ENCODE measurements at regions of chr17 and their contacts with region 1.

Region 1: DNA sequence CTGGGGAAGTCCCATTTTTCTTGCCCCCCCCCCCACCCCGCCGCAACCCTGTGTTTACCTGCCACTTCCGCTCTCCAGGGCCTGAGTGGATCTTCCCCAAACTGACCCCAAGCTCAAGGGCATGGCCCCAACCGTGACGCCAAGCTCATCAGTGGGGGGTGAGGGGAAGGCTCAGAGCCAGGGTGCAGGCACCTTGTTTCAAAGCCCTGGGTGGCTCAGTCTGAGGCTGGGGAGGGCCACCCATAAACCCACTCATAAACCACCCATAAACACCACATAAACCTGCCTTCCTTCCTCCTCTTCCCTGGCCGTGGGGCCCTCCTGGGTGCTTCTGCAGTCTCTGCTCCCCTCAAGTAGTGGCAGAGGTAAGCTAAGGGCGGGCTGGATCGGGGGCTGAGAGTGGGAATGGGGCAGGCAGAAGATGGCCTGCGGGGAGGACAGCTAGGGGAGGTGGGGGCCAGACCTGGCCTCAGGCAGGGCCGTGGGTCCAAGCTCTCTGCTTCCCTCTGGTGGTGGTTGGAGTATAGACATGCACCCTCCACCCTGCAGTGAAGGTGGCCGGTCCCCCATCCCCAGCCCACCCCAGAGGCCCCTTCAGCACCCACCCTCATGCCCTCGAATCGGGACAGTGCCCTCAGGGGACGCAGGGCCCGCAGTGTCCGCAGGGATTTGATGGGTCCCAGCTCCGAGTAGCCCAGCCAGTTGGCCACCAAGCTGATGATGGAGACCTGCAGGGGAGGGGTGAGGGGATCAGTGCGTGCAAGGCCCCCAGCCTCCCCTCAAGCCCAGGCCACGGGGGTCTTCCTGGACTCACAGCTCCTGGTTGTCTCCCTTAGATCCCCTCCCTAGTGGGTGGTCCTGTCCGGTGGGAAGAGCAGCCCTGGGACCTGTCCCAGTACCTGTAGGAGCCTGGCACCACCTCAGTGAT is 14.6 kb upstream of the CD79B start:
- DNase-seq: peak in 2 of 3 donors; percentile 55 to 68
- ATAC-seq: peak; percentile 74 to 86 (median 82)
- H3K4me3 ChIP-seq: no peak overlapping the region
- H3K27ac ChIP-seq: no peak overlapping the region
- H3K4me1 ChIP-seq: no peaks in the 10 kb centered on the region
- H3K27me3 ChIP-seq: no peaks in the 10 kb centered on the region
- CTCF ChIP-seq: peak; percentile 55 to 86 (median 84)
- POLR2A ChIP-seq: no peak

Region 2: GRCh38 chr17:63685041-63685440 is 261.7 kb before region 1 on chr17:
- intact Hi-C with region 1: no loop called
- DNase-seq: no peak
- ATAC-seq: no peak
- H3K4me3 ChIP-seq: no peak overlapping the region
- H3K27ac ChIP-seq: no peak overlapping the region
- H3K4me1 ChIP-seq: peaks cover 0 to 10% (median 2%) of the 10 kb centered on the region in 4 donors
- H3K27me3 ChIP-seq: no peaks in the 10 kb centered on the region
- CTCF ChIP-seq: no peak
- POLR2A ChIP-seq: no peak

Region 3: DNA sequence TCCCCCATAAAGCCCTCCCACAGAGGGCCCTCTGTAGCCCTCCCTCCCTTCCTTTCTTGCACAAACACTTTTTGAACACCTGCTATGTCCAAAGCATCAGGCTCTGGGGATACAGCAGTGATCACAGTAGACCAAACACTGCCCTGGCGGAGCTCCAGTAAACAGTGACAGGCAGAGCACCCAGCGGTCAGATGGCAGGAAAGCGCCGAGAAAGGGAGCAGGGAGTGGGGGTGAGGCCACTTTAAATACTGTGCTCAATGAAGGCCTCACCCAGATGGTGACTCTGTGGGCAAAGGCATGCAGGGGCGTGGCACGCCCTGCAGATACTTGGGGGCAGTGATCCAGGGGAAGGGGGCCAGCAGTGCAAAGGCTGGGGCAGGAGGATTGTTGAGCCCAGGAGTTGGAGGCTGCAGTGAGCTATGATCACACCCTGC is 59.0 kb after region 1 on chr17:
- intact Hi-C with region 1: loop called in 1 of 2 experiments (anchors 10 kb)
- DNase-seq: peak in 2 of 3 donors; percentile 67 to 73
- ATAC-seq: peak; percentile 52 to 67 (median 56)
- H3K4me3 ChIP-seq: no peak overlapping the region
- H3K27ac ChIP-seq: no peak overlapping the region
- H3K4me1 ChIP-seq: peaks cover 0 to 3% (median 0%) of the 10 kb centered on the region in 4 donors
- H3K27me3 ChIP-seq: no peaks in the 10 kb centered on the region
- CTCF ChIP-seq: no peak
- POLR2A ChIP-seq: no peak

Region 4: GRCh38 chr17:64081802-64082799 is 135.4 kb after region 1 on chr17:
- intact Hi-C with region 1: no loop called
- DNase-seq: no peak
- ATAC-seq: peak; percentile 79 to 92 (median 82)
- H3K4me3 ChIP-seq: no peak overlapping the region
- H3K27ac ChIP-seq: peak overlapping the region; percentile 72 to 84 (median 80)
- H3K4me1 ChIP-seq: peaks cover 0 to 72% (median 30%) of the 10 kb centered on the region in 4 donors
- H3K27me3 ChIP-seq: no peaks in the 10 kb centered on the region
- CTCF ChIP-seq: no peak
- POLR2A ChIP-seq: no peak

Region 5: DNA sequence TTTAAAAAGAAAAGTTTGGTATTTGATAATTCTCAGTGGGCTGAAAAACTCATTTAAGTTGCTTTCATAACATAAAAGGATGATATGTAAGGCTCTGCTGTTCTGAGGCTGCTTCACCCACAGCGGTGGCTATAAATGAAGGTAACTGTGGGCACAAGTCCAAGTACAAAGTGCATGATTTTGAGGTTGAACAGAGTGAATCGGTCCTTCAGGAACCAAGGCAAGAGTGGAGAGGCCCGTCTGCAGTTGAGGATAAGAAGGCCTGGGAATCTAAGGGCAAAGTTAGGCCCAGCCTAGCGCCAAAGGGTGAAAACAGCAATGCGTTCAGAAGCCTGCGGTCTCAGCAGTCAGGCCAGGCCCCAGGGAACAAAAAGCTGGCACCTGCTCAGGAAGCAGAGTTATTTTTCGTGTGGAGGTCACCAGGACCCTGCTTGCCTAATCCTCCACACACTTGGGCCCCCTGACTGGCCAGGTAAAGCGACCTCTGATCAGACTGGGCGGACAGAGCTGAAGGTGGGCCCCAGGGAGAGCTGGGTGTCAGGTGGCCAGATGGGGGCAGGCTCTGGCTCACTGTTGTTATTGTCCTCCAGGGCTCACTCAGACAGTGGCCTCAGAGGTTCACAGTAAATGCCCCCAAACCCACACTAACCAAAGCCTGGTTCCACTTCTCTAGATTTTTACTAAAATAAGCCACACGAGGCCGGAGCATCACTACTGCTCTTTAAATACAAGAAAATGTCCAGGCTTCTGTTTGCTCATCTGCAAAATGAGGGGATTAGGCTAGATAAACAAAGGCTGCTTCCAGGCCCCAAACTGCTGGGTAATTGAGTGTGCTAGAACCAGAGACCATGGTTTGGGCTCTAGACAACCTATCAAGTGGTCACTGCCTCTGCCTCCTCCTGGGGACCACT is 269.9 kb after region 1 on chr17:
- intact Hi-C with region 1: no loop called
- DNase-seq: peak; percentile 29 to 74 (median 69)
- ATAC-seq: peak; percentile 80 to 88 (median 82)
- H3K4me3 ChIP-seq: no peak overlapping the region
- H3K27ac ChIP-seq: peak overlapping the region; percentile 23 to 46 (median 41)
- H3K4me1 ChIP-seq: peaks cover 0 to 19% (median 9%) of the 10 kb centered on the region in 4 donors
- H3K27me3 ChIP-seq: no peaks in the 10 kb centered on the region
- CTCF ChIP-seq: peak in 3 of 4 donors; percentile 13 to 31 (median 25)
- POLR2A ChIP-seq: no peak